ENCODE measurements at regions of chr17 and their contacts with region 1.

Region 1: DNA sequence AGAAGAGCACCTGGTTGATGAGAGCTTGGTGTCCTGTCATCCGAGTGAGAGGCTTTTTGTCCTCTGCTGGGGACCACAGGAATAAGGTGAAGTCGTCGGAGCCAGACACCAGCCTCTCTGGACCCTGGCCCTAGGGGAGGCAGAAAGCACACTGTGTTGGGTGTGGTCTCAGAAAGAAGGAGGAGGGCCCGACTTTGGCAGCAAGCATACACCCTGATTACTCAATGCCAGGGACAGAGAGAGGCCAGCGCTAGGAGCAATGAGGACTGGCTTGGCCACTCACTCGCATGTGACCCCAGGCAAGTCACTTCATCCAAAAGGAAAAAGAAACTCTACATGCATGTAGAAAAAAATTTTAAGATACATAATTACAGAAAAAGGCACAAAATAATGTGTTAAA is 6.8 kb downstream of the NLE1 start:
- DNase-seq: peak; percentile 73

Region 2: GRCh38 chr17:35104844-35105450 is 30.4 kb before region 1 on chr17:
- intact Hi-C with region 1: loop called in 1 of 2 experiments (anchors 1 kb)
- DNase-seq: no peak

Region 3: DNA sequence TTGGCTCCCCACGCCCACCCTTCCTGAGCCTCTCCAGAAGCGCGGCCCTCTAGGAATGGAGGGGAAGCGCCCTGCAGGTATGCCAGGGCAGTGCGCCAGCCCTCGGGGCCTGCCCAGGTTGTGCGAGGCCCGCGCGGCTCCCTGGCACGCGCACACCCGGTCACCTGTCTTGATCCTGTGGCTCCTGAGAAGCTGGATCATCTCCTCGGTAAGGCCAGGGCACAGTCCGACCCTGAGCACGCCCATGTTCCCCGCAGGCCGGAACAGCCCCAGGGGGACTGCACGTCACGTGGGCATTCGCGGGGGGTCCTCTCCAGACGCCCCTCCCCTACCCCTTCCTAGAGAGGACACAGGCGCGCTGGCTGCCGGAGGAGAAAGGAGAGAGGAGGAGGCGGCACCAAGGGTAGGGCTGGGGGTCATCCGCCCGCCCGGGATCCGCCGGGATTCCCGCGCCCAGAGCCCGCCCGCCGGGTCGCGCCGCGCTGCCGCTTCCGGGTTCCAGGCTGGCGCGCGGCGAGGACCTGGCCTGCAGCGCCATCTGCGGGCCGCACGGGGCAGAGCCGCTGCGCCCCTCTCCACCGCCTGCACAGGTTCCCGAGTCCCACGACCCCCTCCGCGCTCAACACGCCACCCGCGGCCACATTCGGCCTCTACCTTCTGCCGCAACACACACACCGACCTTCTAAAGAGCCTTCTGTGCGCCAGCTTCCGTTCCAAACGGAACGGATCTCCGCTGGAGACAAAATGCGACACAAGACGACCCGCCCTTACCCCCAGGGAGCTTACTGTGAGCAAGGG is 15.8 kb before region 1 on chr17 and contains the start of gene RAD51D:
- intact Hi-C with region 1: no loop called
- DNase-seq: peak; percentile 91
- total RNA-seq, gene RAD51D: 10.5 to 10.8 TPM

Measured in posterior vena cava (tissue), 2 donors.